Gastrocnemius medialis (tissue), 4 donors: ENCODE measurements at regions of chr6 and their contacts with region 1.

Region 1: GRCh38 chr6:26175428-26176181 is 88.4 kb downstream of the HFE start:
- DNase-seq: no peak
- ATAC-seq: no peak
- H3K4me3 ChIP-seq: no peak overlapping the region
- H3K27ac ChIP-seq: no peak overlapping the region
- H3K4me1 ChIP-seq: peaks cover 4 to 6% of the 10 kb centered on the region in 2 donors
- H3K27me3 ChIP-seq: no peaks in the 10 kb centered on the region
- CTCF ChIP-seq: peak in 3 of 5 experiments; percentile 17 to 58 (median 51)
- POLR2A ChIP-seq: no peak

Region 2: GRCh38 chr6:26025894-26026832 is 149.4 kb before region 1 on chr6:
- in situ Hi-C with region 1: no loop called
- intact Hi-C with region 1: loop called (anchors 5 kb)
- DNase-seq: peak; percentile 86 to 87
- ATAC-seq: peak; percentile 60 to 72
- H3K4me3 ChIP-seq: peak overlapping the region; percentile 46 to 65 (median 62)
- H3K27ac ChIP-seq: peak overlapping the region; percentile 80 to 88 (median 83)
- H3K4me1 ChIP-seq: peaks cover 0 to 15% of the 10 kb centered on the region in 2 donors
- H3K27me3 ChIP-seq: peaks cover 7 to 67% (median 13%) of the 10 kb centered on the region in 3 donors
- CTCF ChIP-seq: peak; percentile 50 to 75 (median 73)
- POLR2A ChIP-seq: peak; percentile 7

Region 3: DNA sequence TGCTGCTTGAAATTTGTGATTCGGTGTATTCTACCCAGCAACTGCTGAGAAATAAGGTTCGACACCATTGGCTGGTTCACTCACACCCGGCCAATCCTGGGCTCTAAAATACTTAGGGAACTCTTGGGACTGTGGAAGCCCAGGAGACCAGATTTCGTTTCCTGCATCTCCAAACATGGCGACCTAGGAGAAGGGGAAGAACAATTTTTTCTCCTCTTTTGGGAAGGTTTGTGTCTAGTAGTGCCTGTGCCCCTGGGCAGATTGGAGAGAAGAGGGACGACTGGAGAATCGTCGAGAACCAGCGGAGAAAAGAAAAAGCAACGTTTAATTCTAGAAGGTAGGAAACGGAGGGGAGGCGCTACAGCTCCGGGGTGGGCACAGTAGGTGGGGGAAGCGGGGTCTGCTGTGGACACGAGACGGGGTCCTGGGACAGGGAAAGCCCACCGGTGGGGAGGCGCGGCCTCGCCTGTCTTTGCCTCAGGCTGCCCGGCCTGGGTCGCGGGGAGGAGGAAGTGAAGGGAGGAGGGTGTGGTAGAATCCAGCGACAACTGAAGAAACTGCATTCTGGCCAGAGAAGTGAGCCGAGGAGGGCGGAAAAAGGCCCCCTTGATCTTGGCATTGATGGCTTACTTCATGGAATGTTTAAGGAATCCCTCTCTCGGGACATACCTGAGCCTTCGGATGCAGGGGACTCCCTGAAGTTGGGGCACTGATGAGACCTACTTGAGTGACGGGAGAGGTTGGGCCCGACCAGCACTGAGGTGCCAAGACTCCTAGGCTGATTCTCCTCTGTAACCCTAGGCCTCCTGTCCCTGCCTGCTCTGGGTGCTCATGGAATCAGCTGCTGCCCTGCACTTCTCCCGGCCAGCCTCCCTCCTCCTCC is 282.4 kb after region 1 on chr6 and contains the start of gene BTN2A1:
- in situ Hi-C with region 1: no loop called
- intact Hi-C with region 1: loop called (anchors 5 kb)
- DNase-seq: peak; percentile 82
- ATAC-seq: peak; percentile 99 to 100
- H3K4me3 ChIP-seq: peak within 1 kb of the TSS; percentile 74 to 94 (median 86)
- H3K27ac ChIP-seq: peak within 1 kb of the TSS; percentile 93 to 97 (median 94)
- H3K4me1 ChIP-seq: peaks cover 28 to 37% of the 10 kb centered on the region in 2 donors
- H3K27me3 ChIP-seq: no peaks in the 10 kb centered on the region
- CTCF ChIP-seq: no peak
- POLR2A ChIP-seq: peak in 1 of 2 donors; percentile 34
- total RNA-seq, gene BTN2A1: 6.2 to 9.7 (median 8.1) TPM